PC-9 (cell line): ENCODE measurements at regions of chr9 and their contacts with region 1.

Region 1: GRCh38 chr9:111896353-111896958 is at the start of gene UGCG:
- DNase-seq: peak; percentile 68 to 96
- H3K4me3 ChIP-seq: peak within 1 kb of the TSS; percentile 76
- H3K27ac ChIP-seq: peak within 1 kb of the TSS; percentile 83
- H3K4me1 ChIP-seq: peaks cover 59% of the 10 kb centered on the region
- H3K27me3 ChIP-seq: no peaks in the 10 kb centered on the region
- CTCF ChIP-seq: no peak
- total RNA-seq, gene UGCG: 79.8 and 88.7 TPM in 2 replicates

Region 2: GRCh38 chr9:111661150-111661801 is 235.2 kb before region 1 on chr9 and contains the start of gene GNG10:
- CTCF ChIA-PET with region 1: no interaction called
- POLR2A ChIA-PET with region 1: no interaction called
- intact Hi-C with region 1: loop called (anchors 2 kb)
- DNase-seq: peak in 1 of 2 experiments; percentile 69
- H3K4me3 ChIP-seq: peak within 1 kb of the TSS; percentile 73
- H3K27ac ChIP-seq: peak within 1 kb of the TSS; percentile 48
- H3K4me1 ChIP-seq: peaks cover 16% of the 10 kb centered on the region
- H3K27me3 ChIP-seq: no peaks in the 10 kb centered on the region
- CTCF ChIP-seq: no peak
- total RNA-seq, gene GNG10: 70.8 and 76.9 TPM in 2 replicates

Region 3: DNA sequence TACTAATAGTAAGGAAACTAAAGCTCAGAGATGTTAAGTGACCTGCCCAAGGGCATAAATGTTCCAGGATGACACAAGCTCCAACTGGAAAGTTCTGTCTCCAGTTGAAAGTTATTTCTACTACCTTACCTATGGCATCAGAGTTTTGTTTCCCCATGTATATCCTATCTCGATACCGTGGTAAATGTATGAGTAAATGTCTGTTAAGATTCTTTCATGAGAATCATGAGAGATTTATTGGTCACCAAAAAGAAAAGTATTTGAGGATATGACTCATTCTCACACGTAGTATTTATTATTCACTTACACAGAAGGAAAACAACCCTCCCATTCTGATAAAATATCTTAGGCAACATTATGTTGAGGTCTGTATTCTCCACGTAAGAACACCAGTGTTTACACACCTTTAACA is 90.6 kb before region 1 on chr9:
- CTCF ChIA-PET with region 1: no interaction called
- POLR2A ChIA-PET with region 1: no interaction called
- intact Hi-C with region 1: loop called (anchors 5 kb)
- DNase-seq: peak in 1 of 2 experiments; percentile 96
- H3K4me3 ChIP-seq: peak overlapping the region; percentile 3; the same call in 1 of the 2 replicates
- H3K27ac ChIP-seq: peak overlapping the region; percentile 93
- H3K4me1 ChIP-seq: peaks cover 35% of the 10 kb centered on the region
- H3K27me3 ChIP-seq: no peaks in the 10 kb centered on the region
- CTCF ChIP-seq: no peak

Region 4: GRCh38 chr9:111857609-111858211 is 38.7 kb before region 1 on chr9:
- CTCF ChIA-PET with region 1: no interaction called
- POLR2A ChIA-PET with region 1: no interaction called
- intact Hi-C with region 1: loop called (anchors 1 kb)
- DNase-seq: peak; percentile 62 to 94
- H3K4me3 ChIP-seq: peak overlapping the region; percentile 15; the same call in 1 of the 2 replicates
- H3K27ac ChIP-seq: peak overlapping the region; percentile 67
- H3K4me1 ChIP-seq: peaks cover 31% of the 10 kb centered on the region
- H3K27me3 ChIP-seq: no peaks in the 10 kb centered on the region
- CTCF ChIP-seq: no peak

Region 5: DNA sequence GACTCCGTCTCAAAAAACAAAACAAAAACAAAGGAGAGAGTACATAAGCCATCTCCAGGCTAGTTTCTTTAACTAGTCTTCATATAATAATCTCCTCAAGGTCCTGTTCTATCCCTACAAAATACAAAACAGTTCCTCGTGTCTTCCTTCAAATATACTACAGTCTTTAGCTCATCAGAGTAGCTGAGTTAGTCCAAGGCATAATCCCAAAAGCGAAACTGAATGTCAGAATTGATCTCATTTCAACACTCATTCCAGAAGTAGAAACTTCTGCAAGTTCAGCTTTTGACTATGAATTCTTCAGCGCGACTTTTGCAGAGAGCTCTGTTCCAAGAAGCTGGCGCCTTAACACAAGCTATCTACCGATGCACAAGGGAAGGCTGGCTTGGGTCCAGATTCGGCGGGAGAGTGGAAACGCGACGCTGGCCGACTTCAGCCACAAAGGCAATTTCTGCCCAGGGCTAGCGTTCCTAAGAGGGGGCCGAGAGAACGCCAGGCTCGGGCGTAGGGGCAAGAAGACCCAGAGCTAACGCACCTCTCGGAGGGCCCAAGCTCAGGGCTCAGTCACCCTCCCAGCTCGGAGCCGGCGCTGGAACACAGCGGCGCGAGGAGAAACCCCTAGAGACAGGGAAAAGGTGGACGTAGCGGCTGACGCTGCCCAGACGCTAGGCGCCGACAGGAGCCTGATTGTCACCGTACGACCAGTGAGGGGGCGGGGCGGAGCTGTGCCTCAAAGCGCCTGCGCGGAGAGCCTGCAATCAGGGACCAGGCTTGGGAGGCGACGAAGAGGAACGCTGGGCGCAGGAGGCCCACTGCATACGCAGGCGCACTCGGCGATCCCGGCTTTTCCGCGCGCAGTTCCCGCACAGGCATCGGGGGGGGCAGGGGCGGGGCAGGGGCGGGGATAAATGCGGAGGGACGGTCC is 483.0 kb after region 1 on chr9:
- CTCF ChIA-PET with region 1: no interaction called
- POLR2A ChIA-PET with region 1: interaction called, 8 read pairs
- intact Hi-C with region 1: loop called (anchors 10 kb)
- DNase-seq: peak; percentile 92 to 100
- H3K4me3 ChIP-seq: peak overlapping the region; percentile 95
- H3K27ac ChIP-seq: peak overlapping the region; percentile 75
- H3K4me1 ChIP-seq: peaks cover 28% of the 10 kb centered on the region
- H3K27me3 ChIP-seq: no peaks in the 10 kb centered on the region
- CTCF ChIP-seq: no peak

Region 6: DNA sequence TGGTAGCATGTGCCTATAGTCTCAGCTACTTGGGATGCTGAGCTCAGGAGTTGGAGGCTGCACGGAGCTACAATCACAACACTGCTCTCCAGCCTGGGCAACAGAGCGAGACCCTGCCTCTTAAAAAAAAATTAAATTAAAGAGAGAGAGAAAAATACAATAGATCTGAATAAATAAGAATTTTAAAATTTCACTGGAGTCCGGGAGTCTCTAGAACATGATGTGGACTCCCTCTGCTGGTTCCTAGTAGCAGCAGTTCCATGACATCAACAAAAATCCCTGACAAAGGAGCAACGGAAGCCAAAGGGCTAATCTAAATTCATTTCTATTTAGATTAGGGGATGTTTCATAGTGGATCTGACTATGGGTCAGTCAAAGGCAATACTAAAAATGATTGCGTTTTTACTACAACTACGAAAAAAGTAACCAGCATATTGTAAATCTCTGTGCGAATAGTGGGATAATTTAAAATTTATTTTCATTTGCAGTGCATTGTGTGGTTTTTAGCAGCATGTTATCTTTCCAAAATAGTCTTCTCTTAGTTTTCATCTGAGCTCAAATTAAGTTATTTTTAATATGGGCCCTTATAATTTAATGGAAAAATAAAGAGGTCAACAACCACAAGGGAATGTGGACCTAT is 814.7 kb after region 1 on chr9:
- CTCF ChIA-PET with region 1: no interaction called
- POLR2A ChIA-PET with region 1: no interaction called
- intact Hi-C with region 1: no loop called
- DNase-seq: peak in 1 of 2 experiments; percentile 9
- H3K4me3 ChIP-seq: no peak overlapping the region
- H3K27ac ChIP-seq: no peak overlapping the region
- H3K4me1 ChIP-seq: peaks cover 2% of the 10 kb centered on the region; the same call in 1 of the 2 replicates
- H3K27me3 ChIP-seq: no peaks in the 10 kb centered on the region
- CTCF ChIP-seq: peak; percentile 67